ENCODE measurements at regions of chr7 and their contacts with region 1.

Region 1: DNA sequence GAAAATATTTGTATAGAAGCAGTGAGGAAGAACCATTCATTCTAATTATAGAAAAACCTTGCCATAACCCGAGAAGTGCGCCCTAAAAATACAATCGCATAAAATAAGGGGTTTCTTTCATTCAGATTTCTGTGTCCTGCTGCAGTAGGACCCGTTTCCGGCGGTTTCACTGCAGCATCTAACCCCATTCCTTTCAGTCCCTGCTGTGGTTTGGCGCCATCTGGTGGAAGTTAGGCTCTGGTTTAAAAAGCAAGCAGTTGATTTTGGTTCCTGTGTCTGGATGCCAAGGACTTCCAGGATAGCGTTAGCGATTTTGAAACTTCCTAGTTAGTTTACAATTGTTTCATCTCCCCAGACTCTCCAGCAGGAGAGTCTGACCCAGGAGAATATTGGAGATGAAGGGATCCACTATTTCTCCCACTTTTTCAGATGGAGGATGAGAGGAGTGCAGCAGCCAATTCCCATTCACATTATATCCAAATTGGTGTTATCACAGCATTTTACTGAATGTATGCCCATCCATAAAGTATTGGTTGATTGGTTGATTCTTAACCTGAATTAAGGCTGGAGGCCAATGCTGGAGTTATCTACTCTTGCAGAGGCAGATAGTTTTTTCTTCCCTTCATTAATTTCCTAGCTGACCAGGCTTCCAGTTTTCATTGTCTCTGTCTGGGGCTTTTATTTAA is 128.8 kb upstream of the CACNA2D1 start:
- DNase-seq: peak; percentile 81 to 90
- ATAC-seq: peak; percentile 76 to 97 (median 85)
- H3K4me3 ChIP-seq: peak overlapping the region; percentile 42
- H3K27ac ChIP-seq: no peak overlapping the region
- H3K4me1 ChIP-seq: peaks cover 5% of the 10 kb centered on the region
- H3K27me3 ChIP-seq: no peaks in the 10 kb centered on the region
- CTCF ChIP-seq: peak; percentile 90

Region 2: GRCh38 chr7:81857385-81857784 is 715.0 kb before region 1 on chr7:
- intact Hi-C with region 1: no loop called
- DNase-seq: no peak
- ATAC-seq: no peak
- H3K4me3 ChIP-seq: no peak overlapping the region
- H3K27ac ChIP-seq: no peak overlapping the region
- H3K4me1 ChIP-seq: no peaks in the 10 kb centered on the region
- H3K27me3 ChIP-seq: no peaks in the 10 kb centered on the region
- CTCF ChIP-seq: no peak

Region 3: DNA sequence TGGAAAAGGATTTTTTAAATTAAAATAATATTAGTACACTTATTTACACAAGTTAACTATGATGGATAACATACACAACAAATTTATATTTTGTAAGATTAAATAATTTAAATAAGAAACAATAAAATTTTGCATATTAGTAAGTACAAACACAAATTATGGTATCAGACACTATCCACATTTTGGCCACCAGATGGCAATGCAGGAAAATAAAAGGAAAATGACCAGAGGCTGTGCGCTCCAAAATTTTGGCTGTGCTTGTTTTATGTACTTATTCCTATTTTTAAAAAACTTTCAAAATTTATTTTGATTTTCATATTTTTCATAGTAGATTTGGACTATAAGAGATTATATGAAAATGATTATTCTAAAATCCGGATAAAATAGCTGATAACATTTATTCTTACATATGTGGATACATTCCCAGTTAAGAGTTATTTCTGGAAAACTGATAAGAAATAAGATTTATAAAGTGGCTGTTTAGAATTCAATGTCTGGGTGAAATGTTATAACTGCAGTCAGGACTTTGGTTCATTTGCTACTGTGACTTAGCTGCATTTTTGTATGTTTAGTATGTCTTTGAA is 527.7 kb before region 1 on chr7:
- intact Hi-C with region 1: loop called (anchors 2 to 5 kb)
- DNase-seq: no peak
- ATAC-seq: peak in 3 of 4 donors; percentile 43 to 87 (median 66)
- H3K4me3 ChIP-seq: no peak overlapping the region
- H3K27ac ChIP-seq: no peak overlapping the region
- H3K4me1 ChIP-seq: no peaks in the 10 kb centered on the region
- H3K27me3 ChIP-seq: no peaks in the 10 kb centered on the region
- CTCF ChIP-seq: peak; percentile 83

Region 4: GRCh38 chr7:82164813-82165212 is 407.5 kb before region 1 on chr7:
- intact Hi-C with region 1: loop called in 1 of 2 experiments (anchors 5 kb)
- DNase-seq: no peak
- ATAC-seq: peak; percentile 43 to 80 (median 58)
- H3K4me3 ChIP-seq: no peak overlapping the region
- H3K27ac ChIP-seq: peak overlapping the region; percentile 17
- H3K4me1 ChIP-seq: peaks cover 20% of the 10 kb centered on the region
- H3K27me3 ChIP-seq: no peaks in the 10 kb centered on the region
- CTCF ChIP-seq: peak; percentile 28

Region 5: DNA sequence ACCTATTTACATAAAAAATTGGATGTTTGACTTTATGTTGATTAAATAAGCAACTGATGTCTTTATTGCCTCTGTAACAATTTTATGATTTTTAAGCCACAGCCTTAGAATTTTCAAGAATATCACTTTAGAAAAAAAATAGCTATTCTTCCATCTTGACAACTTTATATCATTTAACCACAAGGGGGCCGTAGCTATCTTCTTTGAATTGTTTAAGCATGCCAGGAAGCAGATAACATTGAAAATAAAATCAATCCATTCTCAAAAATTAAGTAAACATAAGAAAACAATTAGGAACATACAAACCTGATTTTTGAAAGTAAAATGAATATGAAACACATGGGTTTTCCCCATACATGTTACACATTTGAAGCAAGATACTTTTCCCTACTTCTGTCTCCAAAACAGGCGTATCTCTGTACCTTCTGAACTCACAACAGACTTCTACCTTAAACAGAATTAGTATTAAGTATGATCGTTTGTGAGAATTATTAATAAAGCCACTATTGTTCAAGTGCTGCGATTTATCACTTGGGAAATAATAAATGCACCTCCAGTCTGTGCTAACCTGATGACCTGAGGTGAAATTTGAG is 337.8 kb before region 1 on chr7:
- intact Hi-C with region 1: loop called (anchors 5 to 10 kb)
- DNase-seq: no peak
- ATAC-seq: peak in 3 of 4 donors; percentile 25 to 62 (median 40)
- H3K4me3 ChIP-seq: no peak overlapping the region
- H3K27ac ChIP-seq: peak overlapping the region; percentile 38
- H3K4me1 ChIP-seq: peaks cover 29% of the 10 kb centered on the region
- H3K27me3 ChIP-seq: no peaks in the 10 kb centered on the region
- CTCF ChIP-seq: peak; percentile 62

Region 6: DNA sequence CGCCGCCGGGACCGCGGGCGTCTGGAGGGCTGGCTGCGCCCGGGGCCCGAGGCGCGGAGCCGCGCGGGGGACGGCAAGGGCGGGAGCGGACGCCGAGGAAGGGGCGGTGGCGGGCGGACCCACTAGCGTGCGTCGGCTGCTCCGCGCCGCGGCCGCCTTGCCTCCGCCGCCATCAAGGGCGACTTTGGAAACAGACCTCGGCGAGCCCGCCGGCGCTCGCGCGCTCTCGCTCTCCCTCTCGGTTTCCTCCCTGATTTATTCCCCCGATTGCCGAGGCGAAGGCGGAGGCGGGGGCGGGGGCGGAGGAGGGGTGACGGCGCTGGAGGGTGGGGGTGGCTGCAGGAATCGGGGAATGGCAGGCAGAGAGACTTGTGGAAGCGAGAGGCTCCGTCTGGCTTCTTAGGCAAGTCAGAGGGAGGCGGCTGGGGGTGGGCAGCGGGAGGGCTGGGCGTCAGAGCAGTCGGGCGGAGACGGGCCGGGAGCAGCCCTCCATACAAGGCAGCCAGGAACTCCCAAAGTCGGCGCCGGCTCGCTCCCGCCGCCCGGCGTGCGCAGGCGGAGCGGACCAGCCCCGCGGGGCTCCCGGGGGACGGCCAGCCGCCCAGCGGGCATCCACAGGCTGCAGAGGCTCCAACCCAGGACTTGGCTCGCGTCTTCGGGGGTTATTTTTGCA is 128.7 kb before region 1 on chr7 and contains the start of gene CACNA2D1:
- intact Hi-C with region 1: loop called in 1 of 2 experiments (anchors 5 kb)
- DNase-seq: peak; percentile 86 to 94
- ATAC-seq: peak; percentile 90 to 93 (median 90)
- H3K4me3 ChIP-seq: peak within 1 kb of the TSS; percentile 79
- H3K27ac ChIP-seq: peak within 1 kb of the TSS; percentile 99
- H3K4me1 ChIP-seq: peaks cover 31% of the 10 kb centered on the region
- H3K27me3 ChIP-seq: no peaks in the 10 kb centered on the region
- CTCF ChIP-seq: no peak
- total RNA-seq, gene CACNA2D1: 97.5 to 167 (median 127) TPM

Region 7: DNA sequence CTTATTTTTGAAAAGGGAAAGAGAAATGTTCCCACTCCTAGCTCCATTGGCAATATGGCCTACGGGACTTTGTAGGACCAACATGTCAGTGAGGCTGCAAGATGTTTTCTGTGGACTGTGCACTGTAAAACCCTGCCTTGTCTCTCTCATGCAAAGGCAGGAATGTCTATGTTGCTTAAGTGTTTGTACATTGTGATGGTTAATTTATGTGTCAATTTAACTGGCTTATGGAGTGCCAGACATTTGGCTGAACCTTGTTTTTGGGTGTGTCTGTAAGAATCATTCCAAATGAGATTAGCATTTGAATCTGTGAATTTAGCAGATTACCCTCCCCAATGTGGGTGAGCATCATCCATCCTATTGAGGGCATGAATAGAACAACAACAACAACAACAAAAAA is 594.4 kb after region 1 on chr7:
- intact Hi-C with region 1: no loop called
- DNase-seq: no peak
- ATAC-seq: no peak
- H3K4me3 ChIP-seq: no peak overlapping the region
- H3K27ac ChIP-seq: no peak overlapping the region
- H3K4me1 ChIP-seq: no peaks in the 10 kb centered on the region
- H3K27me3 ChIP-seq: peaks cover 0 to 25% (median 2%) of the 10 kb centered on the region in 3 donors
- CTCF ChIP-seq: no peak

Measured in psoas muscle (tissue), 8 donors.